Heart right ventricle (tissue), 16 donors: ENCODE measurements at regions of chrX and their contacts with region 1.

Region 1: DNA sequence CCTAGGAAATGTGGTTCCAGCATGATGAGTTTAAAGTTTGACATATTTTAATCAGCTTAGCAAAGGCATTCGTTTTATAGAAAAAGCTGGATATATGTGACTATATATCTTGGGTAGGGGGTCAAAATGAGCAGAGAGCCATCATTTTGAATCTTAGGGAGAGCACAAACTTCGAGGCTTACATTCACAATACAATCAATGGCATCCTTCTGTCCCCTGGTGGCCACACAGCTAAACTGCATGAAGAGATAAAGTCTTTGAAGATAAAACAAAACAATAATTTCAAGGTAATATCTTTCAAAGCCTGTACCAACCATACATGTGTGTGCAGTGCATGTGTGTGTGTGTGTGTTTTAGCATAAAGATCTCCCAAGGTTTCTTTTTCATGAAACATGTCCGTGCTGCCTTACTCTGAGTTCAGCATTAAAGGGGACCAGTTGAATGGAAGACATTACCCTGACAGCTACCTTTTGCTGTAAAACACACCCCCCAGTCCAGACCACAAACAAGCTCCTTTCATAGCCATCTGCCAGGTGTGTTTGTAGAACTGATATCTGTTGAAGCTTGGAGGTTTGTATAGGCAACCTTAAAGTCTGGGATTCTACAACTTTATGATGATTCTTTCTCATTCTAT is 22.0 kb downstream of the DYNLT3 start:
- DNase-seq: peak in 1 of 2 donors; percentile 5
- ATAC-seq: no peak
- H3K4me3 ChIP-seq: no peak overlapping the region
- H3K27ac ChIP-seq: no peak overlapping the region
- H3K4me1 ChIP-seq: peaks cover 0 to 6% (median 0%) of the 10 kb centered on the region in 9 donors
- H3K27me3 ChIP-seq: peaks cover 0 to 4% (median 0%) of the 10 kb centered on the region in 7 donors
- CTCF ChIP-seq: peak; percentile 53 to 86 (median 72)

Region 2: DNA sequence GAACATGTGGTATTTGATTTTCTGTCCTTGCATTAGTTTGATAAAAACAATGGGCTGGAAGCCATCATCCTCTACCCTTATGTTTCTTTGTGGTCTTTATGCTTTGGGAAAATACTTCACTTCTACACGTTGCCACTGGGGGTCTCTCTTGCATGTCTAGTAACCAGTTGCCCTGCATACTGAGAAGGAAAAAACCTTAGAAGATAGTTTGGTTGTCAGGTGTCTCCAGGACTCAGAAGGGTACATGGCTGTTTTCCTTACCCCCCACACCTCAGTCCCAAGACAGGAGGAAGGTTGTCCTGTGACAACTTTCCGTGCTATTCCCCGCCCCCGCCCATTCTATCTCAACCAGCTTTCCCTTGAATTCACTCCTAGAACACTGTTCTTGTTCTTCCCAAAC is 316.0 kb before region 1 on chrX:
- intact Hi-C with region 1: loop called in 6 of 10 experiments (anchors 5 to 10 kb)
- DNase-seq: no peak
- ATAC-seq: peak in 1 of 8 donors; percentile 41
- H3K4me3 ChIP-seq: no peak overlapping the region
- H3K27ac ChIP-seq: no peak overlapping the region
- H3K4me1 ChIP-seq: no peaks in the 10 kb centered on the region
- H3K27me3 ChIP-seq: peaks cover 0 to 6% (median 0%) of the 10 kb centered on the region in 7 donors
- CTCF ChIP-seq: peak in 7 of 9 donors; percentile 30 to 46 (median 40)

Region 3: GRCh38 chrX:37745354-37745753 is 80.0 kb before region 1 on chrX:
- intact Hi-C with region 1: loop called in 9 of 10 experiments (anchors 1 to 10 kb)
- DNase-seq: peak; percentile 53 to 59
- ATAC-seq: peak in 7 of 8 donors; percentile 38 to 78 (median 57)
- H3K4me3 ChIP-seq: no peak overlapping the region
- H3K27ac ChIP-seq: peak overlapping the region in 1 of 10 donors; percentile 35
- H3K4me1 ChIP-seq: peaks cover 0 to 16% (median 0%) of the 10 kb centered on the region in 9 donors
- H3K27me3 ChIP-seq: peaks cover 0 to 11% (median 0%) of the 10 kb centered on the region in 7 donors
- CTCF ChIP-seq: peak; percentile 30 to 82 (median 68)

Region 4: DNA sequence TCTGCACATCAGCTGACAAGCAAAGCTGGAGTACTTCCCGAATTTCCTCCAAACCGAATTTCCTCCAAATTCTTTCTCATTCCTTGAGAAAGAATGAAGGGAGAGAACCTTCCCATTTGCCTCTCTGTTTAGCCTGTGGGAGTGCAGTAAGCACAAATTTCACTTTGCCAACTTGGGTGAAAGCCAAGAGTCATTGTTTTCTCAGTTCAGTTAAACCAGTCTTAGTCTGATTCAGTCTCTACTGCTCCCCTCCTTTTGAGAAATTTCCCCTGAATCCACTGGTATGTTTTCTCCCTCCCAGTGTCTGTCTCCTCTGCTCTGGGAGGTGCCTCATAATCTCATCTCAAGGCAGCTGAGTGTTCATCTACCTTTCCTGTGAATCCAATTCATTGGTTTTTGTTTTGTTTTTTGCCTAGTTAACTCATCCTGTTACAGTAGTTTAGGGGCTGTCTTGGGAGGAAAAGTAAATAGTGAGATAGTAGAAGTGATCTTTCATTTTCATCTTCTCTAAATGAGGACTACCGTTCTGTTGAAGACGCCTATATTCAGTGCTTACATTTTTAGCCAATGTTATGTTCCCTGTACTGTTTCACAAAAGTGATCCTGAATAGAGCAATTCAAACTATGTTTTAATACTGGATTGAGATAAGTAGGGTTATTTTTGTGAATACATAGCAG is 230.0 kb after region 1 on chrX:
- intact Hi-C with region 1: no loop called
- DNase-seq: no peak
- ATAC-seq: no peak
- H3K4me3 ChIP-seq: no peak overlapping the region
- H3K27ac ChIP-seq: no peak overlapping the region
- H3K4me1 ChIP-seq: no peaks in the 10 kb centered on the region
- H3K27me3 ChIP-seq: peaks cover 0 to 6% (median 0%) of the 10 kb centered on the region in 7 donors
- CTCF ChIP-seq: no peak

Region 5: GRCh38 chrX:38166478-38167083 is 341.3 kb after region 1 on chrX:
- intact Hi-C with region 1: loop called in 1 of 10 experiments (anchors 10 kb)
- DNase-seq: no peak
- ATAC-seq: no peak
- H3K4me3 ChIP-seq: no peak overlapping the region
- H3K27ac ChIP-seq: no peak overlapping the region
- H3K4me1 ChIP-seq: no peaks in the 10 kb centered on the region
- H3K27me3 ChIP-seq: peaks cover 0 to 12% (median 0%) of the 10 kb centered on the region in 7 donors
- CTCF ChIP-seq: peak; percentile 22 to 64 (median 56)

Region 6: DNA sequence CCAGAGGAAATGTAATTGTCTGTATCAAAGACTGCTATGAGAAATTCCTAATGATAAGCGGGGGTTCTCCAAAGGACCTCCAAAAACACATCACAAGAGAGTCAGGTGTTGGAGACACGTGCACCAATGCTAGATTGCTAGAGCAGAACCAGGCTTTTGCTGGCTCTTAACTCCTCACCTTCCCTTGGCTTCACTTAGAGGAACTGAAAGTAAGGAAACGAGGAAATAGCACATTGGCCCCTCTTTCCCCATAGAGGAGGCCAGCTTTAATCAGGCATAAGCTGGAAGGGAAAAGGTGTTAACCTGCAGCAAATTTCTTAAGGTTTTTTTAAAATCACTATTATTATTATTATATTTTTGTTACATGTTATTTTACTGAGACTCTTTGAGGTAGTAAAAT is 540.6 kb after region 1 on chrX:
- intact Hi-C with region 1: no loop called
- DNase-seq: no peak
- ATAC-seq: no peak
- H3K4me3 ChIP-seq: no peak overlapping the region
- H3K27ac ChIP-seq: peak overlapping the region in 1 of 10 donors; percentile 26
- H3K4me1 ChIP-seq: peaks cover 0 to 6% (median 0%) of the 10 kb centered on the region in 9 donors
- H3K27me3 ChIP-seq: peaks cover 0 to 27% (median 0%) of the 10 kb centered on the region in 7 donors
- CTCF ChIP-seq: no peak

Region 7: GRCh38 chrX:39578354-39578869 is 1753.1 kb after region 1 on chrX:
- intact Hi-C with region 1: no loop called
- DNase-seq: peak; percentile 10 to 20
- ATAC-seq: peak in 4 of 8 donors; percentile 27 to 66 (median 59)
- H3K4me3 ChIP-seq: no peak overlapping the region
- H3K27ac ChIP-seq: no peak overlapping the region
- H3K4me1 ChIP-seq: peaks cover 0 to 3% (median 0%) of the 10 kb centered on the region in 9 donors
- H3K27me3 ChIP-seq: peaks cover 0 to 10% (median 0%) of the 10 kb centered on the region in 7 donors
- CTCF ChIP-seq: no peak